AG04449 (cell line): ENCODE measurements at regions of chr19 and their contacts with region 1.

Region 1: DNA sequence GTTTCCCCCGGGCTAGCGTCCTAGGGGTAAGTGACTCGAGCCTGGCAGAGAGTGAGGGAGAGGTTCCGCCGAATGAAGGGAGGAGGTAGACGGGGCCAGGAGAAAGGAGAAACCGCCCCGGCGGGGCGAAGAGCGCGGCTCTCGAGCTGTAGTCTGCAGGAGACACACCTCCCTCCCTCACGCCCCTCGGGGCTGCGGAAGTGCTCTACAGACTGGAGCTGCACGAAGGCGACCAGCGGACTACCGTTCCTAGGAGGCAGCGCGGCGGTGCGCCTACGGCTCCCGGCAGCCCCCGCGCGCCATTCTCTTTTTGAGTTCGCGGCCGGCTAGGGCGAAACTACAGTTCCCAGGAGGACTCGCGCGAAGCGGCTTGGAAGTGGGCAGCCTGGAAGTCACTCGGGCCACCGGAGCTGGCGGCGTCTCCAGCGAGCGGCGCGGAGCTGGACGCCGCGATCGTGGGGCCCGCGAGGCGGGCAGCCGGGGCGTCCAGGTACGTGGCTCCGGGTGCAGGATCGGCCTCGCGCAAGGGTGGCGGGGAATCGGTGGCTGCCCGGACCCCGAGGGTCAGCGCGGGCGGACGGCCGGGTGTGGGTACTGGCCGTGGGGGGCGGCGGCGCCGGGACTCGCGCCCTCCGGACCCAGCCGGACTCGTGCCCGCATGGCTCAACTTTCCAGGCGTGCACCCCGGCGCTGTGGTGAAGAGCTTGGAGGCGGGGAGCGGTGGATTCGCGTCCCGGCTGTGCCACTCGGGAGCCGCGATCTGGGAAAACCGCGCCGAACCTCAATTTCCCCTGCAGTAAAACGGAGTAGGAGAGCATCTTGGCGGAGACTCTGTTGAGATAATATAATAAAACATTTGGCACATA is at the start of gene SIPA1L3:
- DNase-seq: peak; percentile 54
- H3K4me3 ChIP-seq: peak within 1 kb of the TSS; percentile 95
- CTCF ChIP-seq: no peak

Region 2: GRCh38 chr19:37925212-37925611 is 18.1 kb after region 1 on chr19:
- CTCF ChIA-PET with region 1: interaction called, 10 read pairs
- POLR2A ChIA-PET with region 1: no interaction called
- DNase-seq: no peak
- H3K4me3 ChIP-seq: no peak overlapping the region
- CTCF ChIP-seq: no peak

Region 3: DNA sequence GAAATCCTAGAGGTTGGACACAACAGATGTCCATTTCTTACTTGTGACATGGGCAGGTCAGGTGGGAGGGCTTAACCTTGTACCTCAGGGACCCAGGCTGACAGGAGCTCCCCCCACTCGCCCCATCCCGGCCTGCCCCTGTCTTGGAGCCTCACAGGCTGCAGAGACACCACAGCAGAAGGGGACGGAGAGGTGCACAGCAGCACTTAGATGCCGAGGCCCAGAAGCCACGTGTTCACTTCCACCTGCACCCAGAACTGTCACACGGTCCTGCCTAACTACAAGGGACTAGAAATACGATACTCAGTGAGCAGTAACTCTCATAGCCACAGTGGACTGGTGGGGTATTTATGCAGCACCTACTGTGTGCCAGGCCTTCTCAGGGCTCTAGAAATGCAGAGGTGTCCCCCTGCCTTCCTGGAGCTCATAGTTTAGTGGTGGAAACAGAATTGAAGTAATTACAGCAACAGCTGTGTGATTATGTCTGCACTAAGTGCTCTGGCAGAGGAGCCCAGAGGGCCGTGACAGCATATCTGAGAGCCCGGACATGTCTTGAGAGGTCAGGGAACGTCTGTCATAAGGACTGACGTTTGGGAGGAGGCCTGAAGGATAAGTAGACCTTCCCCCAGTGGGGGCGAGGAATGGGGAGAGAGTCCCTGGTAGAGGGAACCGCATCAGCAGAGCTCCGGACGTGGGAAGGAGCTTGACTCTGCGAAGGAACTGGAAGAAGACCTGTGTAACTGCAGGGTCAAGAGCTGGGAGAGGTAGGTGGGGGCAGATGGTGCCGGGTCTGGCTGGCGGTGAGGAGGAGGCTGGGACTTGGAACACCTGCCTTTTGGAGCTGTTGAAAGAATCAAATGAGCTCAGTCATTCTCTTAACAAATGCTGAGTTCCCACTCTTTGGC is 129.9 kb after region 1 on chr19:
- CTCF ChIA-PET with region 1: interaction called, 213 read pairs
- POLR2A ChIA-PET with region 1: interaction called, 4 read pairs
- DNase-seq: no peak
- H3K4me3 ChIP-seq: no peak overlapping the region
- CTCF ChIP-seq: no peak

Region 4: DNA sequence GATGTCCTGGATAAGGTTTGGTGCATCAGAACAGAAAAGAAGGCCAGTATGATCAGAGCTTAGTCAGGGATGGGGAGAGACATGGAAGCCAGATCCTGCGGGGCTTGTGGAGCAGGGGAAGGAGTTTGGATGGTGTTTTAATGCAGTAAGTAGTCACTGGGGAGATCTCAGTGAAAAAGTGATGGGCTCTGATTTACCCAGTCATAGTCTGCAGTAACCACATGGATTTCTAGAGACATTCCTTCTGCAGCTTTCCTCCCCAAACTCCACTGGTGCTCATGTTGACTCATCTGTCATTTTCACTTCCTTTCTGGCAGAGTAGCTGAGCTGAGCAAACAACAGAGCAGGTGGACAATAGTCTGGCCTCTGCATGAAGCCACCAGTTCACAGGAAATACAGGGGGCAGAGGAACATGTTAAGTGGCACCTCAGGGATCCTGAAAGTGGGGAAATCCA is 172.9 kb after region 1 on chr19:
- CTCF ChIA-PET with region 1: interaction called, 100 read pairs
- POLR2A ChIA-PET with region 1: no interaction called
- DNase-seq: peak; percentile 70
- H3K4me3 ChIP-seq: no peak overlapping the region
- CTCF ChIP-seq: no peak

Region 5: DNA sequence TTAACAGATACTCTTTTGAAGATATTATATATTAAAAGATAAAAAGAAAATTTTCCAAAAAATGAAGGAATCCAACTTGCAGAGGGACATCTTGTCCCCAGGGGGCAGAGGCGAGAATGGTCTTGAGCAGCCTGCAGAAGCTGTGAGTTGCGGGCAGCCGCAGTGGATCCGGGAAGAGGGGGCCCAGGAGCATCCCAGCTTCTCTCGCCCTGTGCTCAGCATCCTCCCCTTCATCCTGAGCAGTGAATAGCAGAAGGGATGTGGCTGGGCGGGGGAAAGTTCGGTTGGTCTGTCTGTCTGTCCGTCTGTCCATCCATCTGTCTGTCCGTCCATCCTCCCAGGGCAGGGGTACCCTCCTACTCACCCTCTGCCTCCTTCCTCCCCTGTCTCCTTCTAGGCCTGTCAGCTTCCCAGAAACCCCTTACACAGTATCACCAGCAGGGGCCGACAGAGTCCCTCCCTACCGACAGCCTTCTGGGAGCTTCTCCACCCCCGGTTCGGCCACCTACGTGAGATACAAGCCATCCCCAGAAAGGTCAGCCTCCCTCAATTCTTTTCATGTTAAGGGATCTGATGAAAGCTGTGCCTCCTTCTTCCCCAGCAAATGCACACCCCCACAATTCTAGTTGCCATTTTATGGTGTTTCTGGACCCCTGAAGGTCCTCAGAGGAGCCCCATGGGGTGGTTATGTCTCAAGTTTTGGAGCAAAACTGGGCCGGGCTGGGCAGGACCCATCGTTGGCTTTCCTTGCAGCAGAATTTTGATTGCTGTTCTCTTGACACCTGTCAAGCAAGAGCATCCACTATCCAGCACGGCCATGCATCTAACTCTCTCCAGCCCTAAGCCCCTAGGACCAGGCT is 235.3 kb after region 1 on chr19:
- CTCF ChIA-PET with region 1: interaction called, 72 read pairs
- POLR2A ChIA-PET with region 1: no interaction called
- DNase-seq: no peak
- H3K4me3 ChIP-seq: no peak overlapping the region
- CTCF ChIP-seq: peak; percentile 85

Region 6: GRCh38 chr19:38229585-38230073 is 322.5 kb after region 1 on chr19:
- CTCF ChIA-PET with region 1: interaction called, 18 read pairs
- POLR2A ChIA-PET with region 1: no interaction called
- DNase-seq: no peak
- H3K4me3 ChIP-seq: peak overlapping the region; percentile 62
- CTCF ChIP-seq: peak; percentile 18